Heart left ventricle (tissue), 16 donors: ENCODE measurements at regions of chr9 and their contacts with region 1.

Region 1: GRCh38 chr9:12566404-12567090 is 126.6 kb upstream of the TYRP1 start:
- DNase-seq: no peak
- ATAC-seq: no peak
- H3K4me3 ChIP-seq: no peak overlapping the region
- H3K27ac ChIP-seq: no peak overlapping the region
- H3K4me1 ChIP-seq: no peaks in the 10 kb centered on the region
- H3K27me3 ChIP-seq: no peaks in the 10 kb centered on the region
- CTCF ChIP-seq: no peak
- POLR2A ChIP-seq: no peak

Region 2: DNA sequence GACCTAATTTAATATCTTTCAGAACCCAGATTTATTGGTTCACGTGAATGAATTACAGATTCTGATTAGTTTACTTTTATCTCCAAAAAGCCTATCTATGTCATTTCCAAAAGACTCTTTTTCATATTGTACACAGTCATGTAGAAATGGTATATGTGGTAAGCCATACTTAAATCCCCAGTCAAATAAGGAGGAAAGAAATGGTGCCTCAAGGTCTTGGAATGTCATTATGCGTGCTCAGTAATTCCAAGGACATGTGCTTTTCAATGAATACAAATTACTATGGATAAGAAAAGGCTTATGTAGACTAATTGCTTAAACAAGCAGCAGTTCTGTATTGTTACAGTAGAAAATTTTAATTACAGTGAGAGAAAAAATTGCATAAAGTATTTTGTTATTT is 62.5 kb after region 1 on chr9:
- intact Hi-C with region 1: loop called in 1 of 10 experiments (anchors 10 kb)
- DNase-seq: no peak
- ATAC-seq: no peak
- H3K4me3 ChIP-seq: no peak overlapping the region
- H3K27ac ChIP-seq: no peak overlapping the region
- H3K4me1 ChIP-seq: no peaks in the 10 kb centered on the region
- H3K27me3 ChIP-seq: peaks cover 0 to 9% (median 0%) of the 10 kb centered on the region in 9 donors
- CTCF ChIP-seq: no peak
- POLR2A ChIP-seq: no peak